Sigmoid colon (tissue), 7 donors: ENCODE measurements at regions of chr2 and their contacts with region 1.

Region 1: DNA sequence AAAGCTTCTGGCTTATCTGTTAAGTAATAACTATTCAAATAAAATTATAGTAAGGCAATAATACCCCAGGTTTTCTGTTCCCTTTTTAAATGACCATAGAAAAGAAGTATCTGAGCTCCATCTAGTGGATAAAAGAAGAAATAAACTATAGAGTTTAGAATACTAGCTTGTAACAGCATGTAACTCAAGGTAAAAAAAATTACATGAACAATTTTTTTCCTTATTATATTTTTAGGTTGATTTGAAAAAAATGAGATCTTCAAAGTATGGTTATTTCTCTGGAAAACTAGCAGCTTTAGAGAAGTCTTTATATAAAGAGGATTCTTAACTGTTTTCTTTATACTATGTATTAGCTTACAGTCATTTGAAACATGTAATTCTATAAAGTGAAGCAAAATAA is 58.1 kb downstream of the NCKAP1 start:
- DNase-seq: no peak
- H3K4me3 ChIP-seq: no peak overlapping the region
- H3K27ac ChIP-seq: no peak overlapping the region
- H3K4me1 ChIP-seq: peaks cover 0 to 10% (median 2%) of the 10 kb centered on the region in 4 donors
- H3K27me3 ChIP-seq: no peaks in the 10 kb centered on the region
- CTCF ChIP-seq: peak in 3 of 4 experiments; percentile 43 to 60 (median 44)
- EP300 ChIP-seq: no peak
- POLR2A ChIP-seq: no peak

Region 2: DNA sequence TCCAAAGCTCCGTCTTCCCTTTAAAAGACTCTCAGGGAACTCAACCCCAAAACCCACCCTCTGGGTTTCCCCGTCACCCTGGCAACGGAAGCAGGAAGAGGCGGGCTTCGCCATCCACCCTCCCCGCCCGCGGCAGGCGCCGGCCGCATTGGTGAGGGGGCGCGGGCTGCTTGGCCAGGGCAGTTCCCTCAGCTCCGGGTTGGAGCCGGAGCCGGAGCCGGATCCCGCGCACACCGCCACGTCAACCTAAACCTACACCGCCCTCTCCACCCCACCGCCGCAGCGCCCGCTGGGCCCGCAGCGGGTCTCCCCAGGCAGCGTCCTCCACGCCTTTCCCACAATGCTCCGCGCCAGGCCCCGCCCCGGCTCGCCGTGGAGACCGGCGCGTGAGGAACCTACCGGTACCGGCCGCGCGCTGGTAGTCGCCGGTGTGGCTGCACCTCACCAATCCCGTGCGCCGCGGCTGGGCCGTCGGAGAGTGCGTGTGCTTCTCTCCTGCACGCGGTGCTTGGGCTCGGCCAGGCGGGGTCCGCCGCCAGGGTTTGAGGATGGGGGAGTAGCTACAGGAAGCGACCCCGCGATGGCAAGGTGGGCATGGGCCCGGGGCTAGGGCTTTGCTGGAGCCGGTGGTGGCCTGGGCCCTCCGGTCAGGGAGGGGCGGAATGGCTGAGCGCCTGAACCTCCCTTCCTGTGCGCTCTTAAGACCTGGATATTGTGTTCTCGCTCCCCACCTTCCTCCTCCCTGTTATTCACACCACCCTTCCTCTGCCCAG is 264.0 kb before region 1 on chr2 and contains the start of gene DNAJC10:
- intact Hi-C with region 1: loop called (anchors 5 kb)
- DNase-seq: peak; percentile 90
- H3K4me3 ChIP-seq: peak within 1 kb of the TSS; percentile 78 to 90 (median 88)
- H3K27ac ChIP-seq: peak within 1 kb of the TSS; percentile 84 to 88 (median 88)
- H3K4me1 ChIP-seq: peaks cover 0 to 16% (median 10%) of the 10 kb centered on the region in 4 donors
- H3K27me3 ChIP-seq: no peaks in the 10 kb centered on the region
- CTCF ChIP-seq: no peak
- EP300 ChIP-seq: no peak
- POLR2A ChIP-seq: peak in 1 of 2 donors; percentile 35
- total RNA-seq, gene DNAJC10: 44.3 to 50.1 (median 47.8) TPM

Region 3: GRCh38 chr2:182761903-182762302 is 218.2 kb before region 1 on chr2:
- intact Hi-C with region 1: loop called (anchors 1 kb)
- DNase-seq: peak; percentile 63
- H3K4me3 ChIP-seq: peak overlapping the region in 1 of 4 donors; percentile 8
- H3K27ac ChIP-seq: peak overlapping the region; percentile 50 to 74 (median 68)
- H3K4me1 ChIP-seq: peaks cover 0 to 19% (median 17%) of the 10 kb centered on the region in 4 donors
- H3K27me3 ChIP-seq: no peaks in the 10 kb centered on the region
- CTCF ChIP-seq: peak in 1 of 4 experiments; percentile 38
- EP300 ChIP-seq: no peak
- POLR2A ChIP-seq: no peak

Region 4: GRCh38 chr2:182784777-182785176 is 195.3 kb before region 1 on chr2:
- intact Hi-C with region 1: loop called (anchors 2 kb)
- DNase-seq: no peak
- H3K4me3 ChIP-seq: no peak overlapping the region
- H3K27ac ChIP-seq: no peak overlapping the region
- H3K4me1 ChIP-seq: no peaks in the 10 kb centered on the region
- H3K27me3 ChIP-seq: no peaks in the 10 kb centered on the region
- CTCF ChIP-seq: peak in 3 of 4 experiments; percentile 35 to 52 (median 48)
- EP300 ChIP-seq: no peak
- POLR2A ChIP-seq: no peak

Region 5: GRCh38 chr2:183149489-183149888 is 169.4 kb after region 1 on chr2:
- intact Hi-C with region 1: no loop called
- DNase-seq: no peak
- H3K4me3 ChIP-seq: no peak overlapping the region
- H3K27ac ChIP-seq: no peak overlapping the region
- H3K4me1 ChIP-seq: peaks cover 0 to 15% (median 11%) of the 10 kb centered on the region in 4 donors
- H3K27me3 ChIP-seq: no peaks in the 10 kb centered on the region
- CTCF ChIP-seq: no peak
- EP300 ChIP-seq: no peak
- POLR2A ChIP-seq: no peak